MCF 10A (cell line): ENCODE measurements at regions of chr1 and their contacts with region 1.

Region 1: GRCh38 chr1:162561037-162561616 is 395 bp upstream of the UAP1 start:
- DNase-seq: peak; percentile 100
- H3K4me3 Mint-ChIP-seq: peak overlapping the region; percentile 82
- H3K27ac Mint-ChIP-seq: peak overlapping the region; percentile 91
- H3K4me1 Mint-ChIP-seq: peaks cover 39% of the 10 kb centered on the region
- H3K27me3 Mint-ChIP-seq: no peaks in the 10 kb centered on the region
- CTCF ChIP-seq: no peak

Region 2: DNA sequence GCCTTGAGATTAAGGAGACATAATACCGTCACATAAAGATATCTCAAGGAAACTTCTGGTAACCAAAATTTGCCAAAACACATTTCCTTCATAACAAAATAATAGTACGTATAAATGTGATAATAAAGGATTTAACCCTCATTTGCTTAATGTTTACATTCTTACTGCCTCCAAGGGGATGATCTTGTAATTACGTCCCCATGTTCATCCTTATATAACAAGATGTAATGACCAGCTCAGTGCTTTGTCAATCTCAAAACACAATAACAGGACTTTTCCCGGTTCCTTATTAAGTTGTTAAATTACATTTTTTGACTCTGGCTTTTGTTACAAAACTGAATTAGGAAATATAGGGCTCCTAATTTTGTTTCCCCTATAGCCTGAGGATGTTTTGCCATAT is 104.8 kb before region 1 on chr1:
- CTCF ChIA-PET with region 1: no interaction called
- POLR2A ChIA-PET with region 1: no interaction called
- intact Hi-C with region 1: no loop called
- DNase-seq: no peak
- H3K4me3 Mint-ChIP-seq: no peak overlapping the region
- H3K27ac Mint-ChIP-seq: no peak overlapping the region
- H3K4me1 Mint-ChIP-seq: no peaks in the 10 kb centered on the region
- H3K27me3 Mint-ChIP-seq: no peaks in the 10 kb centered on the region
- CTCF ChIP-seq: peak; percentile 15

Region 3: DNA sequence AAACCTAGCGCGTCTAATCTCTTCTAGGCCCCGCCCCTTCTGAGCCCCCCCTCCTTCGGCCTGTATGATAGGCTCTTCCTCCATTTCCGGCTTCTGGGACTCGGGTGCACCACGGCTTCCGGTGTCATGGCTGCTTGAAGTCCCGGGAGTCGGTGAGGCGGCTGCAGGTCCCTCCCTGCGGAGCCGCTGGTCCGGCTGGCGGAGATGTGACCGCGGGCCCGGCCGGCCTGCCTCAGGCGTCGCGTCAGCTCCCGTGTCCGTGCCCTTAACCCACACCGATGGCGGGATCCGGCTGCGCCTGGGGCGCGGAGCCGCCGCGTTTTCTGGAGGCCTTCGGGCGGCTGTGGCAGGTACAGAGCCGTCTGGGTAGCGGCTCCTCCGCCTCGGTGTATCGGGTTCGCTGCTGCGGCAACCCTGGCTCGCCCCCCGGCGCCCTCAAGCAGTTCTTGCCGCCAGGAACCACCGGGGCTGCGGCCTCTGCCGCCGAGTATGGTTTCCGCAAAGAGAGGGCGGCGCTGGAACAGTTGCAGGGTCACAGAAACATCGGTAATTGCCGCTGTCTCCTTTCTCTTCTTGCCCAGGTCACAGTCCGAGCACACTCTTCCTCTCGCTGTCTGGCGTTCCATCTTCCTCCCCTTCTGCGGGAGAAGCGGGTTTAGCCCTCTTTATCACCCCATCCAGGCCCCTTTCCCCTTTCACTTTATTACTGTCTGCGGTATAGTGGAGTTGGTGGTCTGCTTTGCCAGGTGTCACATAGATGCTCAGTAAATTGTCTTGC is 63.2 kb before region 1 on chr1 and contains the start of gene UHMK1:
- CTCF ChIA-PET with region 1: interaction called, 3 read pairs
- POLR2A ChIA-PET with region 1: interaction called, 8 read pairs
- intact Hi-C with region 1: loop called (anchors 1 kb)
- DNase-seq: peak; percentile 97
- H3K4me3 Mint-ChIP-seq: peak within 1 kb of the TSS; percentile 91
- H3K27ac Mint-ChIP-seq: peak within 1 kb of the TSS; percentile 82
- H3K4me1 Mint-ChIP-seq: peaks cover 12% of the 10 kb centered on the region
- H3K27me3 Mint-ChIP-seq: peaks cover 8% of the 10 kb centered on the region
- CTCF ChIP-seq: no peak
- total RNA-seq, gene UHMK1: 76.9 and 102 TPM in 2 replicates

Region 4: DNA sequence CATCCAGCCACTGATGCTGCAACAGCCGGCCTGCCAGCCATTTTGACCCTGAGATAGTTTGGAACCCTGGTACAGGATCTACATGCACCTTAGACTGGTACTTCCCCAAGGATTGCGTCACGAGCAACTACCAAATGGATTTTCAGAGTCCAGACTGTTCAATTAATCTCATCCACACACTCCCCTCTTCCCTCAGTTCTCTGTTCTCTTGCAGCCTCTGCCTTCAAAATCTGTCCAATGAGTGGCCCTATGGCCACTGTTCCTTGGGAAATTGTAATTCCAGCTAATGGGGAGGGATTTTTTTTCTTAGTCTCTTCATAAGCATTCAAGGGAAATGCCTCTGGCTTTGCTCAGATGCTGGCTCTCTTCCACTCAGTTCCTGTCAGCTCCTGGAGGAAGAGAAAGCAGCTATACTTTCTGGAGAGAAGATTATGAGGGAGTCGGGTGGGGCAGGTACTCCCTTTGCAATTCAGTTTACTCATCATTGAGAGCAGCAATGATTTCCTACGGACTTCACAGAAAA is 19.4 kb before region 1 on chr1:
- CTCF ChIA-PET with region 1: interaction called, 5 read pairs
- POLR2A ChIA-PET with region 1: interaction called, 245 read pairs
- intact Hi-C with region 1: loop called (anchors 1 kb)
- DNase-seq: peak; percentile 96
- H3K4me3 Mint-ChIP-seq: peak overlapping the region; percentile 20
- H3K27ac Mint-ChIP-seq: peak overlapping the region; percentile 73
- H3K4me1 Mint-ChIP-seq: peaks cover 41% of the 10 kb centered on the region
- H3K27me3 Mint-ChIP-seq: no peaks in the 10 kb centered on the region
- CTCF ChIP-seq: no peak

Region 5: DNA sequence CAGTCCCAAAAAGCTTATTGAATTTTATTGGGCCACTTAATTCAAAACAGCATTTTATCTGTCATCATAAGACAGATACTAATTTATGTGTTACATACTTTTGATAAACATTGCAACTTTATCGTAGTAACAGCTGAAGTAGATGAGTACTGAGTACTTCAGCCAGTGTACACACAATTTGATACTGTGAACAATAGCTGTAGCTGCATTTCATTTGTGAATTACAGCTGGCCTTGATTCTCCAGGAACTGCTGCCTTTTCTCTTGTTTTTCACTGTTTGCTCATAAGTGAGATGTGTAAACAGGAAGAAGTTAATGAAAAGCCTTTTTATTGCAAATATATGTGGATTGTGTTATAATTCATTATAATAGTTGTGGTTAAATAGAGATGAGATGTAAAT is 10.6 kb after region 1 on chr1:
- CTCF ChIA-PET with region 1: interaction called, 4 read pairs
- POLR2A ChIA-PET with region 1: interaction called, 58 read pairs
- intact Hi-C with region 1: no loop called
- DNase-seq: no peak
- H3K4me3 Mint-ChIP-seq: no peak overlapping the region
- H3K27ac Mint-ChIP-seq: peak overlapping the region; percentile 14
- H3K4me1 Mint-ChIP-seq: peaks cover 62% of the 10 kb centered on the region
- H3K27me3 Mint-ChIP-seq: no peaks in the 10 kb centered on the region
- CTCF ChIP-seq: no peak

Region 6: GRCh38 chr1:162878000-162878596 is 317.0 kb after region 1 on chr1:
- CTCF ChIA-PET with region 1: no interaction called
- POLR2A ChIA-PET with region 1: no interaction called
- intact Hi-C with region 1: no loop called
- DNase-seq: peak; percentile 87
- H3K4me3 Mint-ChIP-seq: no peak overlapping the region
- H3K27ac Mint-ChIP-seq: no peak overlapping the region
- H3K4me1 Mint-ChIP-seq: no peaks in the 10 kb centered on the region
- H3K27me3 Mint-ChIP-seq: peaks cover 26% of the 10 kb centered on the region
- CTCF ChIP-seq: peak; percentile 95

Region 7: DNA sequence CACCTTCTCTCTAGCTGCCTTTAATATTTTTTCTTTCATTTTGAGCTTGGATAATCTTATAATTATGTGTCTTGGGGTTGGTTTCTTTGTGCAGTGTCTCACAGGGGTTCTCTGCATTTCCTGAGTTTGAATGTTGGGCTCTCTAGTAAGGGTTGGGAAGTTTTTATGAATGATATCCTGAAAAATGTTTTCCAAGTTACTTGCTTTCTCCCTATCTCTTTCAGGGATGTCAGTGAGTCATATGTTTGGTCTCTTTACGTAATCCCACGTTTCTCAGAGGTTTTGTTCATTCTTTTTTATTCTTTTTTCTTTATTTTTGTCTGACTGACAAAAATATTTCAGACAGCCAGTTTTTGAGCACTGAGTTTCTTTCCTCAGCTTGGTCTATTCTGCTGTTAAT is 355.3 kb after region 1 on chr1:
- CTCF ChIA-PET with region 1: no interaction called
- POLR2A ChIA-PET with region 1: no interaction called
- intact Hi-C with region 1: no loop called
- DNase-seq: peak; percentile 46
- H3K4me3 Mint-ChIP-seq: no peak overlapping the region
- H3K27ac Mint-ChIP-seq: no peak overlapping the region
- H3K4me1 Mint-ChIP-seq: peaks cover 11% of the 10 kb centered on the region
- H3K27me3 Mint-ChIP-seq: no peaks in the 10 kb centered on the region
- CTCF ChIP-seq: no peak

Region 8: DNA sequence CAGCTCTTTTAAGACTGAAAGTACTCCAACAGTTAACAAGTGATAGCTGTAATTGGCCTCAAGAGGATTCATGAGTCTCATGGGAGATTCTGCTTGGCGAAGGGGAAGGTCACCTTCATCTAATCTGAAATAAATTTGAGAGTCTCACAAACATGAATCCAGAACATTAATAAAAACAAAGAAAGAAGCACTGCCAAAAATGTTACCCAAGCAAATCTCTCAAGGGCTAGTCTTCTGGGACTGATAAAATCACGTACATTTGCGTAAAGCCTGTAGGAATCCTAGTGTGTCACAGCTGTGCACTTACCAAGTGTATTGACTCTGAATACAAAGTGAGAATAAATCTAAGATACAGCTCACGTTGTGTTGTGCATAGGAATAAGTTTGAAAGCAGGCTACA is 739.4 kb after region 1 on chr1:
- CTCF ChIA-PET with region 1: no interaction called
- POLR2A ChIA-PET with region 1: no interaction called
- intact Hi-C with region 1: no loop called
- DNase-seq: no peak
- H3K4me3 Mint-ChIP-seq: no peak overlapping the region
- H3K27ac Mint-ChIP-seq: no peak overlapping the region
- H3K4me1 Mint-ChIP-seq: no peaks in the 10 kb centered on the region
- H3K27me3 Mint-ChIP-seq: no peaks in the 10 kb centered on the region
- CTCF ChIP-seq: no peak